Left ventricle myocardium inferior (tissue), 1 donor: ENCODE measurements at regions of chr5 and their contacts with region 1.

Region 1: GRCh38 chr5:142769741-142770631 is at the start of gene ARHGAP26:
- DNase-seq: peak; percentile 99
- H3K4me3 ChIP-seq: peak within 1 kb of the TSS; percentile 93
- H3K27ac ChIP-seq: peak within 1 kb of the TSS; percentile 95
- H3K4me1 ChIP-seq: peaks cover 53% of the 10 kb centered on the region
- H3K27me3 ChIP-seq: no peaks in the 10 kb centered on the region
- CTCF ChIP-seq: peak; percentile 42
- total RNA-seq, gene ARHGAP26: 35.7 TPM

Region 2: GRCh38 chr5:142699184-142699720 is 70.7 kb before region 1 on chr5:
- intact Hi-C with region 1: no loop called
- DNase-seq: peak; percentile 90
- H3K4me3 ChIP-seq: no peak overlapping the region
- H3K27ac ChIP-seq: peak overlapping the region; percentile 92
- H3K4me1 ChIP-seq: peaks cover 53% of the 10 kb centered on the region
- H3K27me3 ChIP-seq: no peaks in the 10 kb centered on the region
- CTCF ChIP-seq: peak; percentile 99

Region 3: GRCh38 chr5:142813781-142814498 is 44.0 kb after region 1 on chr5:
- intact Hi-C with region 1: loop called (anchors 5 kb)
- DNase-seq: no peak
- H3K4me3 ChIP-seq: no peak overlapping the region
- H3K27ac ChIP-seq: peak overlapping the region; percentile 83
- H3K4me1 ChIP-seq: peaks cover 100% of the 10 kb centered on the region
- H3K27me3 ChIP-seq: no peaks in the 10 kb centered on the region
- CTCF ChIP-seq: no peak

Region 4: DNA sequence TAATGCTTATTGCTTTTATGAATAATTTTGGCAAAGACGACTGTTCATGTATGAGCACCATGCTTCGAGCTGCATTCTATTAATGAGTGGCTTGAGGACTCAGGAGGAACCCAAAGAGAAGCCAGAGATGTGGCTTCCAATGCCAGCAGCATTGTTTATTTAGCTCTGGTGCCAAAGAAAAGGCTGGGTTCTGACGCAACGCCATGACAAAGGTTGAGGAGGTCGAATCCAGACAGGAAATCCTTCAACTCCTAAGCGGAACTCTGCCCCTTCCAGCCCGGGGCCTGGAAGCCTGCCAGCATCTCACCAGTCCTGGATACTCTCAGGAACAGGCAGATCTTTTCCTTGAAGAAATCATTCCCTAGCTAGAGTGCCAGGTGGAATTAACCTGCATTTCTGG is 104.6 kb after region 1 on chr5:
- intact Hi-C with region 1: loop called (anchors 5 kb)
- DNase-seq: peak; percentile 74
- H3K4me3 ChIP-seq: no peak overlapping the region
- H3K27ac ChIP-seq: peak overlapping the region; percentile 62
- H3K4me1 ChIP-seq: peaks cover 81% of the 10 kb centered on the region
- H3K27me3 ChIP-seq: no peaks in the 10 kb centered on the region
- CTCF ChIP-seq: no peak

Region 5: GRCh38 chr5:143229896-143230675 is 460.1 kb after region 1 on chr5:
- intact Hi-C with region 1: no loop called
- DNase-seq: no peak
- H3K4me3 ChIP-seq: no peak overlapping the region
- H3K27ac ChIP-seq: no peak overlapping the region
- H3K4me1 ChIP-seq: peaks cover 22% of the 10 kb centered on the region
- H3K27me3 ChIP-seq: no peaks in the 10 kb centered on the region
- CTCF ChIP-seq: no peak

Region 6: GRCh38 chr5:143824851-143825720 is 1055.1 kb after region 1 on chr5:
- intact Hi-C with region 1: no loop called
- DNase-seq: peak; percentile 80
- H3K4me3 ChIP-seq: no peak overlapping the region
- H3K27ac ChIP-seq: no peak overlapping the region
- H3K4me1 ChIP-seq: peaks cover 6% of the 10 kb centered on the region
- H3K27me3 ChIP-seq: no peaks in the 10 kb centered on the region
- CTCF ChIP-seq: peak; percentile 97